ENCODE measurements at regions of chr12 and their contacts with region 1.

Region 1: DNA sequence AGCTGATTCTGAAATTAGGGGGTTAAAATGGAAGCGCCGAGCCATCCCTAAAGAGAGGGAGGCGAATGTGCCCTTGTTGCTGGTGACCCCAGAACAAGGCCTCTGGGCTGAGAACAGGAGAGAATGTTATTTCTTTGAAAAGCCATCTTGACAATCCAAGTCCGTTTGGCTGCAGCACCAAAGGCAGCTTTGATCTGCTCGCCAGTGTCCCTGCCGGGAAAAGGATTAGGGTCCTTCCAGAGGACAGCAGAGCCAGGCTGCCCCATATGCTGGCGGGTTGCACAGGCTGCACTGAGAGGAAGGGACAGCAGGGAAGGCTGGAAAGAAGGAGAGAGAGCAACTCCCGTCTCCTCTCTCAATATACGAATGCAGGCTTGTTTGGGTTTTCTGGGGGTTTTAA is 141.7 kb downstream of the TMEM132C start:
- DNase-seq: no peak
- H3K4me3 ChIP-seq: no peak overlapping the region
- H3K27ac ChIP-seq: no peak overlapping the region
- H3K4me1 ChIP-seq: no peaks in the 10 kb centered on the region
- H3K27me3 ChIP-seq: no peaks in the 10 kb centered on the region
- CTCF ChIP-seq: no peak
- EP300 ChIP-seq: no peak
- POLR2A ChIP-seq: no peak

Region 2: GRCh38 chr12:128445415-128446127 is 36.9 kb after region 1 on chr12:
- in situ Hi-C with region 1: no loop called
- intact Hi-C with region 1: loop called (anchors 1 kb)
- DNase-seq: no peak
- H3K4me3 ChIP-seq: no peak overlapping the region
- H3K27ac ChIP-seq: no peak overlapping the region
- H3K4me1 ChIP-seq: no peaks in the 10 kb centered on the region
- H3K27me3 ChIP-seq: no peaks in the 10 kb centered on the region
- CTCF ChIP-seq: no peak
- EP300 ChIP-seq: no peak
- POLR2A ChIP-seq: no peak

Region 3: GRCh38 chr12:128707488-128707887 is 298.8 kb after region 1 on chr12:
- in situ Hi-C with region 1: no loop called
- intact Hi-C with region 1: loop called (anchors 5 kb)
- DNase-seq: no peak
- H3K4me3 ChIP-seq: no peak overlapping the region
- H3K27ac ChIP-seq: no peak overlapping the region
- H3K4me1 ChIP-seq: no peaks in the 10 kb centered on the region
- H3K27me3 ChIP-seq: no peaks in the 10 kb centered on the region
- CTCF ChIP-seq: no peak
- EP300 ChIP-seq: no peak
- POLR2A ChIP-seq: no peak

Region 4: DNA sequence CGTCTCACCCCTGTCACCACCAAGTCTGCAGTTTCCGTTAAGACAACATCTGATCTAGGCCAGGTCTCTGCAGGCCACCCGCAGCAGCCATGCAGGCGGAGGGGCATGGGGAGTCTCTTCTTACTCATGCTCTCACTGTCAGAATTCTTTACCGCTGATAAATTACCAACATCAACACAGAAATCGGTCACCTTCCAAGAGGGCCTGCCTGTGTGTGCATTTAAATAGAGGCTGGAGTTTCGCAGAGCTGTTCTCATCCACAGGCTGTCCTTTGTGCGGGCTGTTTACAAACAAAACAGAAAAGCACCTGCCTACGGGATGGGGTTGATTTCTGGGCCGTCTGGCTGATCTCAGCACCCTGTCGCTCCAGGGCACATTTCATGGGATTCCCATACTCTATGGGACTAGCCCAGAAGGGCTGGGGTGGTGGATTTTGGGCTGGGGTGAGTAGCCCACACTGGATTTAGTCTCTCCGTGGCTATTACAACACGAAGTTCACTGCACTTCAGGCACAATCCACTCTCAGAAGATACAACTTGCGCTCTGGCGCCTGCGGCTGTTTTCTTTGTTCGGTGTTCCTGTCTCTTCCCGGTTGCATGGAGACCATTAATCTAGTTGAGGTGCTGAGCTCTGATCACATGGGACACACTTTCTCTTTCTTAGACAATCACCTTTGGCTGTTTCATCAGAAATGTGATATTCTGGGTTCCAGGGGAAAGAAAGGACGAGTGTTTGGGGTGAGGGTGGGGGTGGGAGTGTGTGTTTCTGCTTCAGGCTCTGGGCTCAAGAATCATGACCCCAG is 775.7 kb after region 1 on chr12:
- in situ Hi-C with region 1: no loop called
- intact Hi-C with region 1: no loop called
- DNase-seq: no peak
- H3K4me3 ChIP-seq: no peak overlapping the region
- H3K27ac ChIP-seq: no peak overlapping the region
- H3K4me1 ChIP-seq: no peaks in the 10 kb centered on the region
- H3K27me3 ChIP-seq: no peaks in the 10 kb centered on the region
- CTCF ChIP-seq: no peak
- EP300 ChIP-seq: no peak
- POLR2A ChIP-seq: no peak

Measured in transverse colon (tissue), 4 donors.